H1 (cell line): ENCODE measurements at regions of chr7 and their contacts with region 1.

Region 1: DNA sequence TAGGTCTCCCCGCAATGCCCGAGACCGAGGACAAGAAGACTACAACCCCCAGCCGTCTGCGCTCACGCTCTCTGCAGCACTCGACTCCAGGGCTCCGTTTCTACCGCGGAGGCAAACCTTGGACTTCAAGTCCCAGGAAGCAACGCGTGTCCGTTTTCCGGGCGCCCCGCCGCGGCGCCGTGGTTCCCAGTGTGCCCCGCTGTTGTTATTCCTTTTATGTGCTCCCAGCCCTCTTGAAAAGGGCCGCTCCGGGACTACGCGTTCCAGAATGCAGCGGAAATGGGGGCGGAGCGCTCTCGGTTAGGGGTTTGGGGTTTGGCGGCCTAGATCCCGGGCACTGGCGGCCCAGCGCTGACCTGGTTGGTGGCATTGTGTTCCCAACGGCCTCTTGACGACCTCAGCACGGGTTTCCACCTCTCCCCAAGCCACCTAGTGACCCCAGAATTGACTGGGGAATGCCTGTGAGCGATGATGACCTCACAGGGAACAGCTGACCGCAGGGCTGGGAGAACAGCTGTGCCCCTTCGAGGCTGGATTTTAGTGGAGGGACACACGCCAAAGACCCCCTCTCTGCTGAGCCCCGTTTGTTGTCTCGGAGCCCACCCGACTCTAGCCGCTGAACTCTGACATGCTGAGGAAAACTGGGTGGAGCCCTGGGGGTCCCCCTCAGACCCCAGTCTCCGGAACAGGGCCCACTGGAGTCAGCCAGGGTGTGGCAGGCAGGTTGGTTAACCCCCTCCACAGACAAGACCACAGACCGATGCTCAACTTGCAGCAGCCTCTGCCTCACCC is 488 bp upstream of the CDK5 start:
- DNase-seq: peak; percentile 98 to 99
- H3K4me3 ChIP-seq: peak overlapping the region; percentile 59 to 91 (median 78)
- H3K27ac ChIP-seq: peak overlapping the region; percentile 61; the same call in 1 of the 2 replicates
- H3K4me1 ChIP-seq: peaks cover 9 to 41% (median 29%) of the 10 kb centered on the region in 4 experiments
- H3K27me3 ChIP-seq: peaks cover 0 to 9% (median 4%) of the 10 kb centered on the region in 4 experiments; a peak in 5 of 7 replicates
- CTCF ChIP-seq: no peak
- EP300 ChIP-seq: no peak
- POLR2A ChIP-seq: peak in 1 of 2 experiments; percentile 49; a peak in 1 of 3 replicates
- RAD21 ChIP-seq: no peak

Region 2: GRCh38 chr7:151028131-151028947 is 29.8 kb before region 1 on chr7 and contains the start of gene ABCB8:
- CTCF ChIA-PET with region 1: interaction called, 30 read pairs
- POLR2A ChIA-PET with region 1: interaction called, 9 read pairs
- DNase-seq: peak; percentile 99
- H3K4me3 ChIP-seq: peak within 1 kb of the TSS; percentile 66 to 97 (median 80)
- H3K27ac ChIP-seq: peak within 1 kb of the TSS; percentile 15; the same call in 1 of the 2 replicates
- H3K4me1 ChIP-seq: peaks cover 0 to 4% (median 2%) of the 10 kb centered on the region in 4 experiments; a peak in 2 of 7 replicates
- H3K27me3 ChIP-seq: peaks cover 0 to 4% (median 0%) of the 10 kb centered on the region in 4 experiments; a peak in 2 of 7 replicates
- CTCF ChIP-seq: peak; percentile 23 to 43 (median 30)
- EP300 ChIP-seq: no peak
- POLR2A ChIP-seq: no peak
- RAD21 ChIP-seq: peak; percentile 21 to 51; a peak in 3 of 4 replicates
- total RNA-seq, gene ABCB8: 22.2 and 27.0 TPM in 2 replicates

Region 3: GRCh38 chr7:151074051-151074450 is 15.9 kb after region 1 on chr7:
- CTCF ChIA-PET with region 1: interaction called, 81 read pairs
- POLR2A ChIA-PET with region 1: interaction called, 77 read pairs
- DNase-seq: no peak
- H3K4me3 ChIP-seq: no peak overlapping the region
- H3K27ac ChIP-seq: no peak overlapping the region
- H3K4me1 ChIP-seq: peaks cover 0 to 13% (median 7%) of the 10 kb centered on the region in 4 experiments; a peak in 6 of 7 replicates
- H3K27me3 ChIP-seq: no peaks in the 10 kb centered on the region
- CTCF ChIP-seq: no peak
- EP300 ChIP-seq: no peak
- POLR2A ChIP-seq: no peak
- RAD21 ChIP-seq: no peak

Region 4: GRCh38 chr7:151080522-151081169 is 22.5 kb after region 1 on chr7 and contains the start of gene FASTK:
- CTCF ChIA-PET with region 1: interaction called, 81 read pairs
- POLR2A ChIA-PET with region 1: interaction called, 77 read pairs
- DNase-seq: peak in 1 of 2 experiments; percentile 88
- H3K4me3 ChIP-seq: peak within 1 kb of the TSS; percentile 79 to 94 (median 88)
- H3K27ac ChIP-seq: peak within 1 kb of the TSS; percentile 76
- H3K4me1 ChIP-seq: peaks cover 3 to 43% (median 27%) of the 10 kb centered on the region in 4 experiments
- H3K27me3 ChIP-seq: peaks cover 0 to 7% (median 5%) of the 10 kb centered on the region in 4 experiments; a peak in 5 of 7 replicates
- CTCF ChIP-seq: no peak; a peak in 1 of 4 replicates
- EP300 ChIP-seq: 0 out of 3 replicates have a peak, but pooled peaks of 1 of the 2 experiments have one; percentile 42
- POLR2A ChIP-seq: peak in 1 of 2 experiments; percentile 62; a peak in 2 of 3 replicates
- RAD21 ChIP-seq: no peak
- total RNA-seq, gene FASTK: 39.4 and 43.8 TPM in 2 replicates

Region 5: GRCh38 chr7:151085691-151086620 is 27.8 kb after region 1 on chr7 and contains the start of gene AGAP3:
- CTCF ChIA-PET with region 1: interaction called, 12 read pairs
- POLR2A ChIA-PET with region 1: interaction called, 17 read pairs
- DNase-seq: peak in 1 of 2 experiments; percentile 86
- H3K4me3 ChIP-seq: peak within 1 kb of the TSS; percentile 58 to 75 (median 66)
- H3K27ac ChIP-seq: no peak within 1 kb of the TSS
- H3K4me1 ChIP-seq: peaks cover 6 to 52% (median 31%) of the 10 kb centered on the region in 4 experiments
- H3K27me3 ChIP-seq: peaks cover 0 to 28% (median 14%) of the 10 kb centered on the region in 4 experiments; a peak in 6 of 7 replicates
- CTCF ChIP-seq: no peak
- EP300 ChIP-seq: no peak
- POLR2A ChIP-seq: peak in 1 of 2 experiments; percentile 48; a peak in 1 of 3 replicates
- RAD21 ChIP-seq: no peak
- total RNA-seq, gene AGAP3: 66.4 and 68.1 TPM in 2 replicates

Region 6: DNA sequence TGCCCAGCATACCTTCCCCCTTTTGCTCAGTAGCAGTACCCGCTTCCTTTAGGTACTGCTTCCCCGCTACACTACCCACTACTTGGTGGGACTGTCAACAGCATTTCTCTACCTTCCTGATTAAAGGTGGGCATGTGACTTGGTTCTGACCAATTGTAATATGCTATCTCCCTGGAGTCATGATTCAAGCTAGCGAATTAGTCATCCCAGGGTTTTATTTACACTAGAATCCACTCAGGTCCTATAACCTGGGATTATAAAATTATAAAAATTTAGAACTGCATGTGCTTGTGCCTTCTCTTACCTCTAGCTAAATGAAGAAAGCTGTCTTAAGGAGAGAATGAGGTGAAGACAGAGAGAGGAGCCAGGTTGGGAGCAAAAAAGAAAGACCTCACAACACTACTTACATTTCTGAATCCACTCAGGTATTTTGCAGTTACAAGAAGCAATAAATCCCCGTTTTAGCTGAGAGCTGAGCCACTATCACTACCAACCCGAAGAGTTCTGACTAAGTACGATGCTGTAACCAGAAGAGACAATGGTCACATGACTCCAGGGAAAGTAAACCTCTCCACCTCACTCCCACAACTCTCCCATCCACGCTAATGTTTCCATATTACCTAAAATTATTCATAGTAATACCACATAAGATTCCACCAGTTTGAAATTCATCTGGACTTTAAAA is 99.6 kb after region 1 on chr7:
- CTCF ChIA-PET with region 1: no interaction called
- POLR2A ChIA-PET with region 1: no interaction called
- DNase-seq: no peak
- H3K4me3 ChIP-seq: no peak overlapping the region
- H3K27ac ChIP-seq: no peak overlapping the region
- H3K4me1 ChIP-seq: no peaks in the 10 kb centered on the region
- H3K27me3 ChIP-seq: peaks cover 0 to 6% (median 0%) of the 10 kb centered on the region in 4 experiments; a peak in 3 of 7 replicates
- CTCF ChIP-seq: no peak
- EP300 ChIP-seq: no peak
- POLR2A ChIP-seq: no peak
- RAD21 ChIP-seq: no peak